Heart left ventricle (tissue), 16 donors: ENCODE measurements at regions of chr2 and their contacts with region 1.

Region 1: GRCh38 chr2:208254871-208255556 is at the start of gene IDH1:
- DNase-seq: peak; percentile 96 to 98 (median 97)
- ATAC-seq: peak; percentile 96 to 97 (median 96)
- H3K4me3 ChIP-seq: peak within 1 kb of the TSS; percentile 73 to 96 (median 84)
- H3K27ac ChIP-seq: peak within 1 kb of the TSS; percentile 51 to 95 (median 84)
- H3K4me1 ChIP-seq: peaks cover 0 to 48% (median 21%) of the 10 kb centered on the region in 12 donors
- H3K27me3 ChIP-seq: no peaks in the 10 kb centered on the region
- CTCF ChIP-seq: peak in 11 of 12 donors; percentile 22 to 60 (median 42)
- POLR2A ChIP-seq: peak in 1 of 2 donors; percentile 52
- total RNA-seq, gene IDH1: 21.5 to 115 (median 34.6) TPM

Region 2: GRCh38 chr2:207892716-207893402 is 362.2 kb before region 1 on chr2:
- intact Hi-C with region 1: no loop called
- DNase-seq: no peak
- ATAC-seq: no peak
- H3K4me3 ChIP-seq: no peak overlapping the region
- H3K27ac ChIP-seq: peak overlapping the region in 4 of 12 donors; percentile 4 to 47 (median 24)
- H3K4me1 ChIP-seq: peaks cover 0 to 25% (median 11%) of the 10 kb centered on the region in 12 donors
- H3K27me3 ChIP-seq: no peaks in the 10 kb centered on the region
- CTCF ChIP-seq: no peak
- POLR2A ChIP-seq: no peak

Region 3: DNA sequence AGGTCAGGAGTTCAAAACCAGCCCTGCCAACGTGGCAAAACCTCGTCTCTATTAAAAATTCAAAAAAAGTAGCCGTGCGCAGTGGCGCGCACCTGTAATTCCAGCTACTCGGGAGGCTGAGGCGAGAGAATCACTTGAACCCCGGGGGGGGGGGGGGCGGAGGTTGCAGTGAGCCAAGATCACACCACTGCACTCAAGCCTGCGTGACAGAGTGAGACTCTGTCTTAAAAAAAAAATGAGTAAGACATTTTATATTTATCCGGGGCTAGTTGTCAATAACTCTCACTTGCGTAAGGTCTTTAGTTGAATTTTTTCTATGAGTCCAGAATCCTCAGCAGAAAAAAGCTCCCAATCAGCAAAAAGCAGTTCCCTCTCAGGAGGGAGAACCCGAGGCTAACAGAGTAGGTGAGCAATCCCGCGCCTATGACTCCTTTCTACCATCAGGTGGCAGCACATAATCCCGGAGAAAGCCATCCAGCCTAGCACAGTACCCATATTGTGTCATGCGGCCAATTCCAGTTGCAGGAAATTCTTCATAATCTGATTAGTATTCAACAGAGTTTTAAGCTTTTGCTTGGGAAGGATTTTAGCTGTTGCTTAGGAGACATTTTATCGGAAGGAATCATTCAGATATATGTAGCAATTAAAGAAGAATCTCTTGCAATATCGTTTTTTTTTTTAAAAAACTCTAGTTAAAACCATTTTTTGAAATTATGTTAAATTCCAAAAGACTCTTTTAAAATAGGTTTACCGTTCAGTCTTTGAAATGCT is 79.8 kb before region 1 on chr2:
- intact Hi-C with region 1: loop called in 6 of 10 experiments (anchors 1 to 5 kb)
- DNase-seq: peak; percentile 61 to 77 (median 67)
- ATAC-seq: peak; percentile 90 to 98 (median 96)
- H3K4me3 ChIP-seq: no peak overlapping the region
- H3K27ac ChIP-seq: no peak overlapping the region
- H3K4me1 ChIP-seq: peaks cover 0 to 34% (median 0%) of the 10 kb centered on the region in 12 donors
- H3K27me3 ChIP-seq: peaks cover 0 to 5% (median 0%) of the 10 kb centered on the region in 9 donors
- CTCF ChIP-seq: peak; percentile 79 to 93 (median 87)
- POLR2A ChIP-seq: no peak

Region 4: DNA sequence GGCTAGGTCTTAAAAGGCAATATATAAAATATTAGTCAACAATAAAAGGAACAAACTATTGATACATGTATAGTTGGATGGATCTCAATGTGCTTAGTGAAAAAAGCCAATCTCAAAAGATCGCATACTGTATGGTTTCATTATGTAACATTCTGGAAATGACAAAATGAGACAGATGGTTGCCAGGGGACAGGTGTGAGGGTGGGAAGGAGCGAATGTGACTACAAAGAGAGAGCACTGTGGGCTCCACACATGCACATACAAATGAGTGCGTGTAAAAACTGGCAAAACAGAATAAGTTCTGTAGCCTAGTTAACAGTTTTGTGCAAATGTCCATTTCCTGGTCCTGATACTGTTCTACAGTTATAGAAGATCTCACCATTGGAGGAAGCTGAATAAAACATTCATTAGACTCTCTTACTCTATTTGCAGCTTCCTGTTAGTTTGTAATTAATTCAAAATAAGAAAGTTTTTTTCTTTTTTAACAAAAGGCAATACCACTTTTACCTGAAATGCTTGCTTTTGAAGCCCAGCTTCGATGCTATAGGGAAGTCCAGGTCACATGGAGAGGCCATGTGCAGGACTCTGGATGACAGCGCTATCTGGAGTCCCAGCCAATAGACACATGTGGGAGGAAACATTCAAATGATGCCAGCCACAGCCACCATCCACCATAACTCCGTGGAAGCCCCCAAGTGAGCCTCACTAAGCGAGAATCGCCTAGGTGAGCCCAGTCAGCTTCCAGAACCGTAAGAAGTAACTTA is 44.1 kb before region 1 on chr2:
- intact Hi-C with region 1: no loop called
- DNase-seq: no peak
- ATAC-seq: no peak
- H3K4me3 ChIP-seq: no peak overlapping the region
- H3K27ac ChIP-seq: no peak overlapping the region
- H3K4me1 ChIP-seq: no peaks in the 10 kb centered on the region
- H3K27me3 ChIP-seq: no peaks in the 10 kb centered on the region
- CTCF ChIP-seq: no peak
- POLR2A ChIP-seq: no peak

Region 5: GRCh38 chr2:208265801-208266552 is 11.0 kb after region 1 on chr2 and contains the start of gene PIKFYVE:
- intact Hi-C with region 1: loop called in 1 of 10 experiments (anchors 1 kb)
- DNase-seq: peak; percentile 96 to 98 (median 97)
- ATAC-seq: peak; percentile 97 to 98 (median 98)
- H3K4me3 ChIP-seq: peak within 1 kb of the TSS; percentile 72 to 100 (median 92)
- H3K27ac ChIP-seq: peak within 1 kb of the TSS; percentile 86 to 99 (median 96)
- H3K4me1 ChIP-seq: peaks cover 3 to 39% (median 26%) of the 10 kb centered on the region in 12 donors
- H3K27me3 ChIP-seq: no peaks in the 10 kb centered on the region
- CTCF ChIP-seq: peak in 2 of 12 donors; percentile 5 to 9
- POLR2A ChIP-seq: peak; percentile 40 to 86
- total RNA-seq, gene PIKFYVE: 12.5 to 31.4 (median 20.3) TPM

Region 6: DNA sequence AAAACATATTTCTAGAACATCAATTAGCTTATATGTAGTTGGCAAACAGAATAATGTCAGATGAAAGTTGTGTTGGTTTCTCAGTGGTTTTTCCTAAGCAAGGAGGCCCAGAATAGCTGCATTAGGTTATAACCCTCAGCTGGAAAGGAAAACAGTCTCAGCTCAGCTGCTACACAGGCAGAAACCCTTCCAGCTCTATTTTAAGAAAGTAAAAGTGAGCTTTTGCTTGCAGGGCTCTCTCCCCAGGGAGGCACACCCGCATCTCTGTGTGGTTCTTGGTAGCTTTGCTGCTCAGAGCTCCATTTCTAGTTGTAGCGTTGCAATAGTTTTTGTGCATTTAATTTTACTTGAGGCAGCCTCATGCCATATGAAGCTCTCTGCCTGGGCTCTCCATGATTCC is 65.7 kb after region 1 on chr2:
- intact Hi-C with region 1: loop called in 1 of 10 experiments (anchors 2 kb)
- DNase-seq: peak; percentile 56 to 72 (median 66)
- ATAC-seq: peak; percentile 90 to 98 (median 96)
- H3K4me3 ChIP-seq: peak overlapping the region in 4 of 12 donors; percentile 10 to 30 (median 16)
- H3K27ac ChIP-seq: peak overlapping the region; percentile 39 to 88 (median 65)
- H3K4me1 ChIP-seq: peaks cover 3 to 30% (median 21%) of the 10 kb centered on the region in 12 donors
- H3K27me3 ChIP-seq: no peaks in the 10 kb centered on the region
- CTCF ChIP-seq: no peak
- POLR2A ChIP-seq: no peak